ENCODE measurements at regions of chr10 and their contacts with region 1.

Region 1: GRCh38 chr10:123994417-123995081 is 98.8 kb downstream of the CHST15 start:
- DNase-seq: peak; percentile 96
- H3K4me3 ChIP-seq: peak overlapping the region; percentile 30 to 43 (median 41)
- H3K27ac ChIP-seq: peak overlapping the region; percentile 54 to 71 (median 68)
- H3K4me1 ChIP-seq: peaks cover 21 to 53% (median 50%) of the 10 kb centered on the region in 4 donors
- H3K27me3 ChIP-seq: peaks cover 0 to 18% (median 8%) of the 10 kb centered on the region in 4 donors
- CTCF ChIP-seq: peak in 2 of 3 experiments; percentile 98 to 99
- EP300 ChIP-seq: no peak
- POLR2A ChIP-seq: no peak

Region 2: GRCh38 chr10:122154545-122155366 is 1839.8 kb before region 1 on chr10:
- intact Hi-C with region 1: no loop called
- DNase-seq: no peak
- H3K4me3 ChIP-seq: peak overlapping the region; percentile 15 to 43 (median 36)
- H3K27ac ChIP-seq: peak overlapping the region; percentile 79 to 90 (median 86)
- H3K4me1 ChIP-seq: peaks cover 69 to 92% (median 81%) of the 10 kb centered on the region in 4 donors
- H3K27me3 ChIP-seq: no peaks in the 10 kb centered on the region
- CTCF ChIP-seq: peak in 1 of 3 experiments; percentile 15
- EP300 ChIP-seq: no peak
- POLR2A ChIP-seq: no peak

Region 3: GRCh38 chr10:124142960-124143359 is 148.4 kb after region 1 on chr10:
- intact Hi-C with region 1: no loop called
- DNase-seq: no peak
- H3K4me3 ChIP-seq: no peak overlapping the region
- H3K27ac ChIP-seq: no peak overlapping the region
- H3K4me1 ChIP-seq: peaks cover 3 to 32% (median 19%) of the 10 kb centered on the region in 4 donors
- H3K27me3 ChIP-seq: no peaks in the 10 kb centered on the region
- CTCF ChIP-seq: no peak
- EP300 ChIP-seq: no peak
- POLR2A ChIP-seq: no peak

Region 4: GRCh38 chr10:124152916-124153826 is 158.6 kb after region 1 on chr10:
- intact Hi-C with region 1: loop called (anchors 5 kb)
- DNase-seq: no peak
- H3K4me3 ChIP-seq: no peak overlapping the region
- H3K27ac ChIP-seq: peak overlapping the region; percentile 61 to 78 (median 66)
- H3K4me1 ChIP-seq: peaks cover 43 to 57% (median 52%) of the 10 kb centered on the region in 4 donors
- H3K27me3 ChIP-seq: no peaks in the 10 kb centered on the region
- CTCF ChIP-seq: no peak
- EP300 ChIP-seq: peak; percentile 10
- POLR2A ChIP-seq: no peak

Region 5: DNA sequence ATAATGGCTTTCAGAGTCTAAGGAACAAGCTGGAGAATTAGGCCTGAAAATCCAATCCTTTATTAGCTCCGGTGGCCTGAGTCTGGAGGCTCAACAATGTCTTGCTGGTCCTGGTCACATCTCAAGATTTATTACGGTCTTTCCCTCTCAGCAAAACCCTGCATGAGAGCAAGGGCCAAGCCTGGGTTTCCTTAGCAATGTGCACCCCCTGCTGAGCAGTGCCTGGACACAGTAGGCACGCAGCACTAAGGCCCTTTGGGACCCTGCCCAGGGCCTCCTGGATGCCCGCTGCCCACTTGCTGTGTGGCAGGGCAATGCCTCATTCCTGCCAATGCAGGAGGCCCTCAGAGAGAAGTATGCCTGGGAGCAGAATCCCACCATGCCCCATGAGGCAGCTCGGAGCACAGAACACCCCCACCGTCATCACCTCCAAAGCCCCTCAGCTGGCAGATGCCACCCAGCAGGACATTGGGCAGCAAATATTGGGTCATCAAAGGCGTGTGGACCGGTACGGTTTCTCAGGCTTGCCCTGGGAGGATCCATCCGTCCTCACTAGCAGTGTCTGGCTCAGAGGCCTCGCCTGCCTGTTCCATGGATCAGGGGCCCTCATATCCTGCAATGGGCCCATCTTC is 267.8 kb after region 1 on chr10:
- intact Hi-C with region 1: loop called (anchors 5 kb)
- DNase-seq: no peak
- H3K4me3 ChIP-seq: no peak overlapping the region
- H3K27ac ChIP-seq: no peak overlapping the region
- H3K4me1 ChIP-seq: peaks cover 0 to 9% (median 2%) of the 10 kb centered on the region in 4 donors
- H3K27me3 ChIP-seq: no peaks in the 10 kb centered on the region
- CTCF ChIP-seq: peak in 2 of 3 experiments; percentile 23 to 30
- EP300 ChIP-seq: no peak
- POLR2A ChIP-seq: no peak

Region 6: DNA sequence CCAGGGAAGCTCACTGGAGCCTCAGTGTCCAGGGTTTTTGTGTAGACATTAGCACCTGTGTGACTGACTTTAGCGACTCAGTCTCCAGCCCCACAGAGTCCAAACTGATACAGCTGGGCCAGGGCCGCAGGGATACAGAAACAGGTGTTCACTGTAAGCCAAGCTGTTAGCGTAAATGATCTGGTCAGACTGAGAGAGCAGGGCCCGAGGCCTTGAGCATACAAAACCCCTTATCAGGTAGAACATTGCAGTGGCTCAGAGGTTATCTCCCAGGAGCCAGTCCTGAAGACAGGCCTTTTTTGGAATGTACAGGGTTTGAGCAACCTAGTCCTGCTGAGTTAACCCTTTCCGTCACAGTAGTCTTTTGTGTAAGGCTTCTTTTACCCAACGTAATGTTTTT is 492.1 kb after region 1 on chr10:
- intact Hi-C with region 1: no loop called
- DNase-seq: no peak
- H3K4me3 ChIP-seq: no peak overlapping the region
- H3K27ac ChIP-seq: no peak overlapping the region
- H3K4me1 ChIP-seq: no peaks in the 10 kb centered on the region
- H3K27me3 ChIP-seq: no peaks in the 10 kb centered on the region
- CTCF ChIP-seq: no peak
- EP300 ChIP-seq: no peak
- POLR2A ChIP-seq: no peak